ENCODE measurements at regions of chr6 and their contacts with region 1.

Region 1: DNA sequence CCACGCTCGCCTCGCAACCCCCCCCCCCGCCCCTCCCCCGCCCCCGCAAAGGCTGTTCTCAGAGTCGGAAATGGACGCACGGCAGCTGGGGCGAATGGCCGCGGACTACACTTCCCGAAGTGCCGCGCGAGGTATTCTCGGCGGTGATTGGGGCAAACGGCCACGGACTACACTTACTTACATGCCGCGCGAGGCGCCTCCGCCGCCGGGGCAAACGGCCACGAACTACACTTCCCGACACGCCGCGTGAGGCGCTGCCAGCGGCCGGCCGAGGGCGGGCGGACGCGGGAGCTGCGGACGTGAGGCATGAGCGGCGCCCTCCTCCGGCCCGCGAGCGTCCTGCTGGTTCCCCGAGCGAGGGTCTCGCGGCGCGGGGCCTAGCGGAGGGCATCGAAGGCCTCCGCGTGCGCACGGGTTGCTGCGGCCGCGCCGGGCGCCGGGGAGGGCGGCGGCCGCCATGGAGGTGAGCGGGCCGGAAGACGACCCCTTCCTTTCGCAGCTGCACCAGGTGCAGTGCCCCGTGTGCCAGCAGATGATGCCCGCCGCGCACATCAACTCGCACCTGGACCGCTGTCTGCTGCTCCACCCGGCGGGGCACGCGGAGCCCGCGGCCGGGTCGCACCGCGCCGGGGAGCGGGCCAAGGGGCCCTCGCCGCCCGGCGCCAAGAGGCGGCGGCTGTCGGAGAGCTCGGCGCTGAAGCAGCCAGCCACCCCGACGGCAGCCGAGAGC is at the start of gene WRNIP1:
- DNase-seq: peak; percentile 98 to 100
- ATAC-seq: peak; percentile 87 to 90
- H3K4me3 ChIP-seq: peak within 1 kb of the TSS; percentile 62 to 88 (median 74)
- H3K27ac ChIP-seq: peak within 1 kb of the TSS; percentile 85 to 96 (median 91)
- H3K4me1 ChIP-seq: peaks cover 39 to 47% of the 10 kb centered on the region in 2 donors
- H3K27me3 ChIP-seq: no peaks in the 10 kb centered on the region
- CTCF ChIP-seq: peak; percentile 56 to 81 (median 75)
- POLR2A ChIP-seq: peak; percentile 90 to 92
- total RNA-seq, gene WRNIP1: 51.9 to 66.0 (median 57.3) TPM

Region 2: GRCh38 chr6:2141644-2142290 is 623.6 kb before region 1 on chr6:
- in situ Hi-C with region 1: no loop called
- intact Hi-C with region 1: no loop called
- DNase-seq: no peak
- ATAC-seq: no peak
- H3K4me3 ChIP-seq: no peak overlapping the region
- H3K27ac ChIP-seq: no peak overlapping the region
- H3K4me1 ChIP-seq: no peaks in the 10 kb centered on the region
- H3K27me3 ChIP-seq: no peaks in the 10 kb centered on the region
- CTCF ChIP-seq: no peak
- POLR2A ChIP-seq: no peak

Region 3: DNA sequence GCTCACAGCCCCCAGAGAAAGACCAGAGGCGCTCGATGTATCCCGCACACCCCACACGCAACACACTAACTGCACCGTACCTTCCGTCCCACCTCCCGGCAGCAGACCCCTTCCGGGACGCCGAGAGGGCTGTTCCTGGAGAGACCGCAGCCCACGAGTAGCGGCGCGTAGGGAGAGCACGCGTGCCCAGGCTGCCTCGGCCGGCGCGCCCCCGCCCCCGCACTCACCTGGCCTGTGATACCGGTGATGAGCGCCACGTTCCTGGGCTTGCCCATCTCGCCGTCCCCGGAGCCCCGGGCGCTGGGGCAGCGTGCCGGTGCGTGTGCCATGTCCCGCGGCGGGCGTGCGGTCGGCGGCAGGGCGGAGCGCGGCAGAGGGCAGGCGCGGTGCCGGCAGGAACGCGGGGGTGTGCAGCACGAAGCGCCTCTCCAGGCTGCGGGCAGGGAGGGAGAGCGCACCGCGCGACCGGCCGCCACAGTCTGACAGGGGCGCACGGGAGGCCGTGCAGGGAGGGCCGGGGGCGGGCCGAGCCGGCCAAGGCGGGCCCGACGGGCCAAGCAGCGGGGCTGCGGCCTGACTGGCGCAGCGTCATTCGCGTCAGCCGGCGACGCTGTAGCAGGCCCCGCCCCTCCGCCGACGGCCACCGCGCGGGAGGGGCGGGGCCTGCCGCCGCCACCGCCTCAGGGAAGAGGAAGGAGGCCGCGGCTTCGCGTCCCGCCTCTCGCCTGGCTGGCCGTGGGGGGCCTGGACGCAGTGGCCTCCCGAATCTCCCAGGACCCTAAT is 520.0 kb before region 1 on chr6 and contains the start of gene GMDS:
- in situ Hi-C with region 1: no loop called
- intact Hi-C with region 1: loop called (anchors 5 kb)
- DNase-seq: peak; percentile 64 to 78
- ATAC-seq: peak; percentile 90
- H3K4me3 ChIP-seq: peak within 1 kb of the TSS; percentile 70 to 96 (median 71)
- H3K27ac ChIP-seq: peak within 1 kb of the TSS; percentile 88 to 96 (median 90)
- H3K4me1 ChIP-seq: peaks cover 5 to 13% of the 10 kb centered on the region in 2 donors
- H3K27me3 ChIP-seq: no peaks in the 10 kb centered on the region
- CTCF ChIP-seq: peak in 1 of 5 experiments; percentile 17
- POLR2A ChIP-seq: peak; percentile 91 to 96
- total RNA-seq, gene GMDS: 3.4 to 7.2 (median 4.6) TPM

Region 4: GRCh38 chr6:2738373-2738979 is 26.9 kb before region 1 on chr6:
- in situ Hi-C with region 1: no loop called
- intact Hi-C with region 1: loop called (anchors 1 kb)
- DNase-seq: no peak
- ATAC-seq: peak in 1 of 2 donors; percentile 48
- H3K4me3 ChIP-seq: no peak overlapping the region
- H3K27ac ChIP-seq: no peak overlapping the region
- H3K4me1 ChIP-seq: peaks cover 13 to 25% of the 10 kb centered on the region in 2 donors
- H3K27me3 ChIP-seq: no peaks in the 10 kb centered on the region
- CTCF ChIP-seq: peak; percentile 49 to 67 (median 55)
- POLR2A ChIP-seq: no peak

Region 5: GRCh38 chr6:2799936-2800527 is 34.7 kb after region 1 on chr6:
- in situ Hi-C with region 1: no loop called
- intact Hi-C with region 1: no loop called
- DNase-seq: no peak
- ATAC-seq: peak in 1 of 2 donors; percentile 72
- H3K4me3 ChIP-seq: no peak overlapping the region
- H3K27ac ChIP-seq: no peak overlapping the region
- H3K4me1 ChIP-seq: peaks cover 0 to 12% of the 10 kb centered on the region in 2 donors
- H3K27me3 ChIP-seq: no peaks in the 10 kb centered on the region
- CTCF ChIP-seq: no peak
- POLR2A ChIP-seq: no peak

Region 6: DNA sequence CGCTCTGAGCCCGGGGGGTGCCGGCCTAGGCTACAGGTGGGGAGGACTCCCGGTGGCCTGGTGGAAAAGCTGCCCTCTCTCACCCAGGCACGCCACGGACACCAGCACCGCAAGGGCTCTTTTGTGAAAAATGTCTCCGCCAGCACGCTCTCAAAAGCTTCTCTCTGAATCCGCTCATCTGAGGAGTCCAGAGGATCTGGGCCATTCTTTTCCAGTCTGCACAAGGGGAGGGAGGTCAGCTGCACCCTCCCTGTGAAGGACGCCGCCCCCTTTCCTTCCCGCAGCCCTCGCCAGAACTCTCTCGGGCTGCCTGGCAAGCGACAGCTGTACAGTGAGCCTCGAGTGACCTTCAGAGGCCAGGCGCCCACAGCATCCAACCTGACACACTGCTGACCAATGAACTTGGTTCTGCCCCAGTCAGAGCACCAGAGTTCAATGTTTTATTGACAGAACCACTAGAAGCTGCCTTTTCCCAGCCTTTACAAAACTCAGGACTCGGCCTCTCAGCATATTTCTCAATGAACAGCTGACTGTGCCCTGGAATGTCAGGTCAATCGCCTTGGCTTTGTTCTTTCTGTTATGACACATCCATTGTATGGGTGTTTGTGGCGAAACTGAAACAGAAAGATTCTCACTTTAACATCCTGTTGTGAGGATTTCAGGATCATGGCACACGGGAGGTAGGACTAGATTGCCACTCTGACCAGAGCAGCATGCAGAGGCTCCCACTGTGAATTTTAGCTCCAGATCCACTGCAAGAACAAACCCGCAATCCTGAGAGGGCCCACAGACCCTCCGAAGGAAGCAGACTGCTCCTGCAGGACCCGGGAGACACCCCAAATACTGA is 111.1 kb after region 1 on chr6:
- in situ Hi-C with region 1: no loop called
- intact Hi-C with region 1: no loop called
- DNase-seq: peak in 1 of 2 donors; percentile 51
- ATAC-seq: peak; percentile 75
- H3K4me3 ChIP-seq: peak overlapping the region; percentile 53 to 81 (median 60)
- H3K27ac ChIP-seq: peak overlapping the region; percentile 63 to 78 (median 66)
- H3K4me1 ChIP-seq: peaks cover 0 to 11% of the 10 kb centered on the region in 2 donors
- H3K27me3 ChIP-seq: peaks cover 0 to 11% (median 0%) of the 10 kb centered on the region in 3 donors
- CTCF ChIP-seq: no peak
- POLR2A ChIP-seq: peak in 1 of 2 donors; percentile 9